ENCODE measurements at regions of chr1 and their contacts with region 1.

Region 1: DNA sequence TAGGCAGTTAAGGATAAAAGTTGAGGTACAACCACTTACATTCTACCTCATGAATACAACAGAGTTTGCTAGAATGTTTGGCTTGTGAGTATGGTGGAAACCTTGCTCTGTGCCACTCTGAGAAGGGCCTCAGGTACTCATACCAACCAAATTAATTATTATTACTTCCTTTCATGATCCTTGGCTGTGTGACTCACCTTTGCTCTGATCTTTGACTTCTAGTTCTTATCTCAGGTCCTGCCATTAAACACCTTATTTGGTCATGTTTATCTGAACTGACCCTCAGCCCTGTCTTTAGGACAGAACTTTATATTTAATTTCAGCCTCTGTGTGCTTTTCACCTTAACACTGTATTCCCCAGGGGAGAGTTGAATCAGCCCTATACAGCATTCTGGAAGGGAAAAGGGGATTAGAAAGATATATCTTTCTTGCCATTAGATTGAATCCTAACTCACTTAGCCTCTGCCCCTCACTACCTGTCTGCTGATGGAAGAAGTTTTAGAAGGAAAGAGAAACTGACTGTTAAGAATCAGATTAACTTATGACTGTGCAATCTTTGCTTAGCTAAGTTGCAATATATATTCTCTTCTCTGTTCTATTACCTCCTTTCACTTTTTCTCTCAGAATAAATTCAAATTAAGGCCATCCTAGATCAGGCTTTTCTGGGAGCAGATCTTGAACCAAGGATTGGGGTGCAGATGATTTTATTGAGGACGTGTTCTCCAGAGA is 260.4 kb upstream of the DPYD start:
- DNase-seq: peak; percentile 48 to 49
- H3K4me3 ChIP-seq: no peak overlapping the region
- H3K4me3 Mint-ChIP-seq: peak overlapping the region; percentile 20
- H3K27ac Mint-ChIP-seq: peak overlapping the region; percentile 89
- H3K4me1 ChIP-seq: peaks cover 51% of the 10 kb centered on the region
- H3K4me1 Mint-ChIP-seq: peaks cover 26% of the 10 kb centered on the region
- H3K27me3 ChIP-seq: no peaks in the 10 kb centered on the region
- H3K27me3 Mint-ChIP-seq: no peaks in the 10 kb centered on the region
- CTCF ChIP-seq: no peak

Region 2: GRCh38 chr1:98001764-98002163 is 179.4 kb before region 1 on chr1:
- CTCF ChIA-PET with region 1: no interaction called
- POLR2A ChIA-PET with region 1: no interaction called
- intact Hi-C with region 1: loop called (anchors 10 kb)
- DNase-seq: no peak
- H3K4me3 ChIP-seq: no peak overlapping the region
- H3K4me3 Mint-ChIP-seq: no peak overlapping the region
- H3K27ac Mint-ChIP-seq: no peak overlapping the region
- H3K4me1 ChIP-seq: peaks cover 7% of the 10 kb centered on the region
- H3K4me1 Mint-ChIP-seq: no peaks in the 10 kb centered on the region
- H3K27me3 ChIP-seq: no peaks in the 10 kb centered on the region
- H3K27me3 Mint-ChIP-seq: no peaks in the 10 kb centered on the region
- CTCF ChIP-seq: peak in 1 of 2 experiments; percentile 15

Region 3: GRCh38 chr1:98068016-98068415 is 113.2 kb before region 1 on chr1:
- CTCF ChIA-PET with region 1: no interaction called
- POLR2A ChIA-PET with region 1: no interaction called
- intact Hi-C with region 1: no loop called
- DNase-seq: no peak
- H3K4me3 ChIP-seq: no peak overlapping the region
- H3K4me3 Mint-ChIP-seq: no peak overlapping the region
- H3K27ac Mint-ChIP-seq: no peak overlapping the region
- H3K4me1 ChIP-seq: no peaks in the 10 kb centered on the region
- H3K4me1 Mint-ChIP-seq: no peaks in the 10 kb centered on the region
- H3K27me3 ChIP-seq: no peaks in the 10 kb centered on the region
- H3K27me3 Mint-ChIP-seq: no peaks in the 10 kb centered on the region
- CTCF ChIP-seq: no peak

Region 4: DNA sequence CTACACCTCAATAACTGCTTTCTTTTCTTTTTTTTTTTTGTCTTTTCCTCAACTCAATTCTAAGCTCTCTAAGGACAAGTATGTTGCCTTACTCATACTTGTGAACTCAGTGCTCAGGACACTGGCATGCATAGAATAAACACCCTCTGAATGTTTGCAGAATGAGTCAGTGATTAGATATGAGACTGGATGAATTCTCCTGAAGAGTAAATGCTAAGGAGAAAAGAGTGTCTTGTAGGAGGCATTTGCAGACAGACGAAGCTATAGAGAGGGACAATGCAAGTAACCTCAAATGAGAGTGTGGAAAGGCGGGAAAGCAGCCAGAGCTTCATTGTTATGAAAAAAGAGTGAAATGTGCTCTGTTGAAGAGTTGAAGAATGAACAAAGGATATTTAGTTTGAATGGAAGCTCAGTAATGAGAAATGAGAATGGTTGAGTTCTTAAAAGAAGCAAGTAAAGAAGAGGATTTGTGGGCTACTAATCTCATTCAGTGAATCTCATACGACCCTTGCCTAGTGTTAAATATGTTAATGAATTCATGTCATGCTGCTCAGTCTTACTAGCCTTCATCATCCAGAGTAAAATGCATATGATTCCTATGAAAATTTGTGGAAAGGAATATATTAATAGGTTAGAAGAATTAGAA is 94.3 kb before region 1 on chr1:
- CTCF ChIA-PET with region 1: no interaction called
- POLR2A ChIA-PET with region 1: no interaction called
- intact Hi-C with region 1: loop called (anchors 2 kb)
- DNase-seq: peak; percentile 50 to 53
- H3K4me3 ChIP-seq: no peak overlapping the region
- H3K4me3 Mint-ChIP-seq: peak overlapping the region; percentile 56
- H3K27ac Mint-ChIP-seq: peak overlapping the region; percentile 89
- H3K4me1 ChIP-seq: peaks cover 5% of the 10 kb centered on the region
- H3K4me1 Mint-ChIP-seq: peaks cover 37% of the 10 kb centered on the region
- H3K27me3 ChIP-seq: no peaks in the 10 kb centered on the region
- H3K27me3 Mint-ChIP-seq: no peaks in the 10 kb centered on the region
- CTCF ChIP-seq: no peak

Region 5: DNA sequence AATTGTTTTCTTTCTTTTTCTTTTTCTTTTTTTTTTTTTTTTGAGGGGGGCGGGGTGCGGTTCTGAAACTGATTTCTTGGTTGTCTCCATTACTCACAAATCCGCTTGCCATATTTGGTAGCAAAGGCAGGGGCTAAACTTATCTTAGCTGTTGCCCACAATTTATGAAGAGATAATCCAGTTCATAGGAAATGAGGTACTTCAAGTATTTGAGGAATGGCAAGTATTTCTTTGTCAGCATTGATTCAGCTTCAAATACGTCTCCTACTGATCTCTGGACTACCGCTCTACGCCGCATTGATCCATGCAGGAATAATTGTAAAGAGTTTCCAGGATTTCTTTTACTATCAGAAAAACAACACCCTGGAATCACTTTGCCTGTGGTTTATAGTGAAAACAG is 28.9 kb after region 1 on chr1:
- CTCF ChIA-PET with region 1: no interaction called
- POLR2A ChIA-PET with region 1: no interaction called
- intact Hi-C with region 1: loop called (anchors 1 kb)
- DNase-seq: peak; percentile 54 to 61
- H3K4me3 ChIP-seq: no peak overlapping the region
- H3K4me3 Mint-ChIP-seq: peak overlapping the region; percentile 76
- H3K27ac Mint-ChIP-seq: peak overlapping the region; percentile 84
- H3K4me1 ChIP-seq: peaks cover 56% of the 10 kb centered on the region
- H3K4me1 Mint-ChIP-seq: peaks cover 20% of the 10 kb centered on the region
- H3K27me3 ChIP-seq: no peaks in the 10 kb centered on the region
- H3K27me3 Mint-ChIP-seq: no peaks in the 10 kb centered on the region
- CTCF ChIP-seq: no peak

Region 6: GRCh38 chr1:98264727-98265126 is 83.5 kb after region 1 on chr1:
- CTCF ChIA-PET with region 1: no interaction called
- POLR2A ChIA-PET with region 1: no interaction called
- intact Hi-C with region 1: no loop called
- DNase-seq: no peak
- H3K4me3 ChIP-seq: no peak overlapping the region
- H3K4me3 Mint-ChIP-seq: no peak overlapping the region
- H3K27ac Mint-ChIP-seq: no peak overlapping the region
- H3K4me1 ChIP-seq: 0 out of 2 replicates have a peak, but pooled peaks cover 3% of the 10 kb centered on the region
- H3K4me1 Mint-ChIP-seq: no peaks in the 10 kb centered on the region
- H3K27me3 ChIP-seq: no peaks in the 10 kb centered on the region
- H3K27me3 Mint-ChIP-seq: no peaks in the 10 kb centered on the region
- CTCF ChIP-seq: no peak

Region 7: GRCh38 chr1:98277118-98277517 is 95.9 kb after region 1 on chr1:
- CTCF ChIA-PET with region 1: no interaction called
- POLR2A ChIA-PET with region 1: no interaction called
- intact Hi-C with region 1: loop called (anchors 2 kb)
- DNase-seq: peak in 1 of 2 experiments; percentile 3
- H3K4me3 ChIP-seq: no peak overlapping the region
- H3K4me3 Mint-ChIP-seq: no peak overlapping the region
- H3K27ac Mint-ChIP-seq: no peak overlapping the region
- H3K4me1 ChIP-seq: peaks cover 22% of the 10 kb centered on the region
- H3K4me1 Mint-ChIP-seq: no peaks in the 10 kb centered on the region
- H3K27me3 ChIP-seq: no peaks in the 10 kb centered on the region
- H3K27me3 Mint-ChIP-seq: no peaks in the 10 kb centered on the region
- CTCF ChIP-seq: no peak

Region 8: GRCh38 chr1:98437545-98437944 is 256.3 kb after region 1 on chr1:
- CTCF ChIA-PET with region 1: no interaction called
- POLR2A ChIA-PET with region 1: no interaction called
- intact Hi-C with region 1: loop called (anchors 1 kb)
- DNase-seq: peak; percentile 41 to 61
- H3K4me3 ChIP-seq: no peak overlapping the region
- H3K4me3 Mint-ChIP-seq: no peak overlapping the region
- H3K27ac Mint-ChIP-seq: peak overlapping the region; percentile 1
- H3K4me1 ChIP-seq: peaks cover 15% of the 10 kb centered on the region
- H3K4me1 Mint-ChIP-seq: peaks cover 13% of the 10 kb centered on the region
- H3K27me3 ChIP-seq: no peaks in the 10 kb centered on the region
- H3K27me3 Mint-ChIP-seq: no peaks in the 10 kb centered on the region
- CTCF ChIP-seq: no peak

Region 9: GRCh38 chr1:98458598-98459485 is 277.6 kb after region 1 on chr1:
- CTCF ChIA-PET with region 1: no interaction called
- POLR2A ChIA-PET with region 1: no interaction called
- intact Hi-C with region 1: loop called (anchors 1 kb)
- DNase-seq: peak; percentile 69 to 71
- H3K4me3 ChIP-seq: 0 out of 2 replicates have a peak overlapping the region, but pooled peaks have one; percentile 14
- H3K4me3 Mint-ChIP-seq: peak overlapping the region; percentile 58
- H3K27ac Mint-ChIP-seq: peak overlapping the region; percentile 69
- H3K4me1 ChIP-seq: peaks cover 33% of the 10 kb centered on the region
- H3K4me1 Mint-ChIP-seq: peaks cover 23% of the 10 kb centered on the region
- H3K27me3 ChIP-seq: no peaks in the 10 kb centered on the region
- H3K27me3 Mint-ChIP-seq: no peaks in the 10 kb centered on the region
- CTCF ChIP-seq: no peak

Measured in Caco-2 (cell line).